ENCODE measurements at regions of chr19 and their contacts with region 1.

Region 1: DNA sequence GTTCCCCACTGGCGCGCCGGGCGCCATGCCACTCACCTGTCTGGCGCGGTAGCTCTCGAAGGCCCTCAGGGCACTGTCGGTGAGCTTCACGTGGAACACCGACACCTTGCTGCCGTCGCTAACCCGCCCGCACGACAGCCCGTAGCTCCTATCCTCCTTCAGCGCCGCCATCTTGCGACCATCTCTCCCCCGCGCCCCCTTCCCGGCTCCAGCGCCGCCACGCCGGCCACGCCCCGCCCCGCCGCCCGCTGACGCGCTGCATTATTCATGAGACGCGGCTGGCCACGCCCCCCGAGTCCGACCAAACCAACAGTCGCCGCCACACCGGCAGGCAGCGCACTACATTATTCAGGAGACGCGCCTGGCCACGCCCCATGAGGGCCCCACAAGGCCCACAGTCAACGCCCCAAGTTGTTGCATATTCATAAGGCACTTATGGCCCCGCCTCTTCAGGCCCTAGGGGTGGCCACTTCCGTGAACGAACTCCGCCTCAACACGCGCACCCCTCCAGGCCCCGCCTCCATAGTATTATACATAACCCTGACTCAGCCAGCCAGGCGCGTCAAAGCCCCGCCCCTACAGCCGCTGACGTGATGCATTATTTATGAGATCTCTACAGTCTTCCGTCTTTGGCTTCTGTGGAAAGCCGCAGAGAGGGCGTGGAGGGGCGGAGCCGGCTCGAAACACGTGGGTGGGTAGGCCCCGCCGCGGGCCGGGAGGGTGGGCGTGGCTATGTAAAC is at the start of gene ELL:
- DNase-seq: peak; percentile 100
- H3K4me3 Mint-ChIP-seq: peak within 1 kb of the TSS; percentile 90
- H3K27ac Mint-ChIP-seq: peak within 1 kb of the TSS; percentile 92
- H3K4me1 Mint-ChIP-seq: peaks cover 16% of the 10 kb centered on the region
- H3K27me3 Mint-ChIP-seq: no peaks in the 10 kb centered on the region
- total RNA-seq, gene ELL: 24.7 to 29.7 TPM

Region 2: DNA sequence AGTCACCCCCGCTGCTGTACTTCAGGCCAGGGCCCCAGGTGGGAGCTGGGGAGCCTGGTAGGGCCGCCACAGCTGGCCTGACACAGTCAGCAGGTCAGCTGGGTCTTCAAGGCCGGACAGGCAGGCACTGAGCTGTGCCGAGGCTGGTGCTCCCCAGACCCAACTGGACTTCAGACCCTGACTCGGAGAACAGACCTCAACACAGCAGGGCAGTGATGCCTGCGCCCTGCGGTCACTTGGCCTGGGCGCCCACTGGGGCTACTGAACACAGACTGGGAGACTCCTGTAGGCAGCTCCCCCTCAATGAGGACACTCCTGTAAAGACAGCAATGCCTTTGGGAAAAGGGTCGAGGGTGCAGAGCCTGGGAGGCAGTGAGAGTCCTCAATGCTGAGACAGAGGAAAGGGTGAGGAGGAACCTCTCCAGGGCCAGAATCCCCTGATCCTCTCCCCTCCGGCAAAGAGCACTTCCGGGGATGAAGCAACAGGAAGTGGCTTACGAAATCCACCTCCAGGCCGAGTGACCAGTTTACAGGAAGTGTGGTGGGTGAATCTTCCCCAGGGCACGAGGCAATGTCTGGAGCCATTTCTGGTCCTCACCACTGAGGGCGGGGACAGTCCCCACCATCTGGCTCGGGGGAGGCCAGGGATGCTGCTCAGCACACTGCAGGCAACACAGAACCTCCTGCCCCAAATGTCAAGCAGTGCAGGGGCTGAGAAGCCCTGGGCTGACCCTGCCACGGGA is 43.3 kb before region 1 on chr19:
- CTCF ChIA-PET with region 1: interaction called, 61 read pairs
- POLR2A ChIA-PET with region 1: interaction called, 7 read pairs
- intact Hi-C with region 1: loop called (anchors 2 kb)
- DNase-seq: peak; percentile 92
- H3K4me3 Mint-ChIP-seq: peak overlapping the region; percentile 54
- H3K27ac Mint-ChIP-seq: peak overlapping the region; percentile 96
- H3K4me1 Mint-ChIP-seq: peaks cover 93% of the 10 kb centered on the region
- H3K27me3 Mint-ChIP-seq: no peaks in the 10 kb centered on the region

Region 3: GRCh38 chr19:18503971-18504885 is 17.8 kb before region 1 on chr19:
- CTCF ChIA-PET with region 1: interaction called, 91 read pairs
- POLR2A ChIA-PET with region 1: interaction called, 12 read pairs
- intact Hi-C with region 1: loop called (anchors 2 kb)
- DNase-seq: no peak
- H3K4me3 Mint-ChIP-seq: no peak overlapping the region
- H3K27ac Mint-ChIP-seq: peak overlapping the region; percentile 83
- H3K4me1 Mint-ChIP-seq: peaks cover 87% of the 10 kb centered on the region
- H3K27me3 Mint-ChIP-seq: no peaks in the 10 kb centered on the region

Region 4: DNA sequence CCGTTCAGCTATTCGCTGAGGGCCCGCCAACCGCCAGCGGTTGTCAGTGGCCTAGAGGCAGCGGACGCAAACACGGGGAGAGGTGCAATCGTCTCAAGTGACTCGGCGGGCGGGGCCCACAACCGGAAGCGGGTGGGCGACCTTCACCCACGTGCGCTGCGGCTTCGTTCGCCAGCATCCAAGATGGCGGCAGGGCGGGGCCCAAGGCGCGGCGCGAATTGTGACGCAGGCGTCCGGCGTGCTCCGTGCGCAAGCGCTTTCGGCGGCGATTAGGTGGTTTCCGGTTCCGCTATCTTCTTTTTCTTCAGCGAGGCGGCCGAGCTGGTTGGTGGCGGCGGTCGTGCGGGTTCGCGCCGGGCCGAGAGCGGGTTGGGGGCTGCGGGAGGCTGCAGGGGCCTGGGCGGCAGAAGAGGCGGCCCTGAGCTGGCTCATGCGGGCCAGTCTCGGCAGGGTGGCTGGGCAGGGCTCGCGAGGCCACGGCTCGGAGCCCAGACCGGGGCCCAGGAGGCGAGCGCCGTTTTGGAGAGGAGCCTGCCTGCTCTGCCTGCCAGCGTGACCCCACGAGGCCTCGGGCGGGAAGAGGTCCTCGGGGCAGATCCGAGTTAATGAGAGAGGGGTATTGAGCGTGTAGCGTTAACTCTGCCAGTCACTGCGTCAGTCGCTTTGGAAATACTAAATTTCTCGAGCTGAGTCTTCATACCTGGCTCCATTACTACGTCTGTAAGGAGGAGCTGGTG is 49.7 kb after region 1 on chr19 and contains the start of gene UBA52:
- CTCF ChIA-PET with region 1: interaction called, 29 read pairs
- POLR2A ChIA-PET with region 1: interaction called, 6 read pairs
- intact Hi-C with region 1: loop called (anchors 1 kb)
- DNase-seq: peak; percentile 99
- H3K4me3 Mint-ChIP-seq: peak within 1 kb of the TSS; percentile 91
- H3K27ac Mint-ChIP-seq: peak within 1 kb of the TSS; percentile 92
- H3K4me1 Mint-ChIP-seq: peaks cover 23% of the 10 kb centered on the region
- H3K27me3 Mint-ChIP-seq: no peaks in the 10 kb centered on the region
- total RNA-seq, gene UBA52: 1,569 to 1,601 TPM

Region 5: GRCh38 chr19:18919086-18919899 is 397.2 kb after region 1 on chr19 and contains the starts of genes COPE and DDX49:
- CTCF ChIA-PET with region 1: interaction called, 3 read pairs
- POLR2A ChIA-PET with region 1: no interaction called
- intact Hi-C with region 1: loop called (anchors 2 kb)
- DNase-seq: peak; percentile 99
- H3K4me3 Mint-ChIP-seq: peak within 1 kb of the TSS; percentile 89
- H3K27ac Mint-ChIP-seq: peak within 1 kb of the TSS; percentile 84
- H3K4me1 Mint-ChIP-seq: peaks cover 35% of the 10 kb centered on the region
- H3K27me3 Mint-ChIP-seq: no peaks in the 10 kb centered on the region
- total RNA-seq, gene COPE: 217 to 220 TPM
- total RNA-seq, gene DDX49: 37.7 to 46.3 TPM